ENCODE measurements at regions of chr1 and their contacts with region 1.

Region 1: GRCh38 chr1:38012363-38013226 is at the start of gene UTP11:
- DNase-seq: peak; percentile 94 to 99 (median 96)
- ATAC-seq: peak; percentile 89
- H3K4me3 ChIP-seq: peak within 1 kb of the TSS; percentile 89
- H3K27ac ChIP-seq: peak within 1 kb of the TSS; percentile 98
- H3K4me1 ChIP-seq: peaks cover 29 to 61% of the 10 kb centered on the region in 2 experiments
- H3K27me3 ChIP-seq: no peaks in the 10 kb centered on the region
- CTCF ChIP-seq: peak in 1 of 3 experiments; percentile 3; a peak in 1 of 6 replicates
- EP300 ChIP-seq: peak; percentile 44; the same call in 1 of the 2 replicates
- POLR2A ChIP-seq: peak; percentile 97
- RAD21 ChIP-seq: no peak
- polyA plus RNA-seq, gene UTP11: 269 to 303 TPM

Region 2: GRCh38 chr1:37817481-37817880 is 195.1 kb before region 1 on chr1:
- CTCF ChIA-PET with region 1: no interaction called
- POLR2A ChIA-PET with region 1: no interaction called
- in situ Hi-C with region 1: no loop called
- intact Hi-C with region 1: no loop called
- DNase-seq: peak in 2 of 4 experiments; percentile 15 to 36
- ATAC-seq: peak; percentile 80
- H3K4me3 ChIP-seq: no peak overlapping the region
- H3K27ac ChIP-seq: no peak overlapping the region
- H3K4me1 ChIP-seq: no peaks in the 10 kb centered on the region
- H3K27me3 ChIP-seq: no peaks in the 10 kb centered on the region
- CTCF ChIP-seq: 0 out of 6 replicates have a peak, but pooled peaks of 1 of the 3 experiments have one; percentile 20
- EP300 ChIP-seq: no peak
- POLR2A ChIP-seq: no peak
- RAD21 ChIP-seq: no peak

Region 3: DNA sequence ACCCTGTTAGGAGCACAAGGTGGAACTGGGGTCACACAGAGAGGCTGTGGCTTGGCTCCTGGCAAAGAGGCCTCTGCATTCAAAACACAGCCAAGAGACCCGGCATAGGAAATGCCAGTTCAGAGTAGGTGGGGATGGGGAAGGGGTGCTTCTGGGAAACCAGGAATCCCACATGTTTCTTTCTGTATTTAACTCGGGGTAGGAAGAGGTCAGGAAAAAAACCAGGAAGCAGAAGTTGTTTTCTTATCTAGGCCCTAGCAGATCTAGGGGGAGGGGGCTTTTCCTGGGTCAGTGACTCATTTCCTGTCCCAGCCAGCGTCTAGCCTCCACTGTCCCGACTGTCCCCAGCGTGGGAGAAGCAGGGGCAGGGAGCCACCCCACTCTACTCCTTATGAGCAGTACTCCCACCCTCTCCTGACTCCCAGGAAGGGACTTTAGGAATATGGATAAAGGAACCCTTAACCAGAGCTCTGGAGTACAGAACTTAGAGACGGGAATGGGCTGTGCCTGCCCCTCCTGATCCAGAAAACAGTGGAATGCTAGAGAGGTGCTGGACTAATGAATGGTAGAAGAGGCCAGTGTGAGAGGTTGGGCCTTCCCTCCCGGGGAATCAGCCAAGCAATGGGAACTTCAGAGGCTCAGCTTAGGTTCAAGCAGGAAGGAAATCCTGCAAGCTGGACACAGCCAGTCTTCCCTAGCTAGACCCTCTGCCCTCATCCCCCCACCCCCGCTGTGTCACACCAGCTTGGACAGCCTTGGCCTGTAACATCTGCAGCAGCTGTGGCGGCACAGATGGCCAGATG is 13.0 kb before region 1 on chr1:
- CTCF ChIA-PET with region 1: no interaction called
- POLR2A ChIA-PET with region 1: interaction called, 66 read pairs
- in situ Hi-C with region 1: no loop called
- intact Hi-C with region 1: loop called (anchors 1 kb)
- DNase-seq: peak; percentile 84 to 96 (median 89)
- ATAC-seq: peak; percentile 74
- H3K4me3 ChIP-seq: peak overlapping the region; percentile 65
- H3K27ac ChIP-seq: peak overlapping the region; percentile 96
- H3K4me1 ChIP-seq: peaks cover 51 to 73% of the 10 kb centered on the region in 2 experiments
- H3K27me3 ChIP-seq: no peaks in the 10 kb centered on the region
- CTCF ChIP-seq: no peak
- EP300 ChIP-seq: peak; percentile 98
- POLR2A ChIP-seq: peak; percentile 81
- RAD21 ChIP-seq: 0 out of 4 replicates have a peak, but pooled peaks of 1 of the 2 experiments have one; percentile 2

Region 4: DNA sequence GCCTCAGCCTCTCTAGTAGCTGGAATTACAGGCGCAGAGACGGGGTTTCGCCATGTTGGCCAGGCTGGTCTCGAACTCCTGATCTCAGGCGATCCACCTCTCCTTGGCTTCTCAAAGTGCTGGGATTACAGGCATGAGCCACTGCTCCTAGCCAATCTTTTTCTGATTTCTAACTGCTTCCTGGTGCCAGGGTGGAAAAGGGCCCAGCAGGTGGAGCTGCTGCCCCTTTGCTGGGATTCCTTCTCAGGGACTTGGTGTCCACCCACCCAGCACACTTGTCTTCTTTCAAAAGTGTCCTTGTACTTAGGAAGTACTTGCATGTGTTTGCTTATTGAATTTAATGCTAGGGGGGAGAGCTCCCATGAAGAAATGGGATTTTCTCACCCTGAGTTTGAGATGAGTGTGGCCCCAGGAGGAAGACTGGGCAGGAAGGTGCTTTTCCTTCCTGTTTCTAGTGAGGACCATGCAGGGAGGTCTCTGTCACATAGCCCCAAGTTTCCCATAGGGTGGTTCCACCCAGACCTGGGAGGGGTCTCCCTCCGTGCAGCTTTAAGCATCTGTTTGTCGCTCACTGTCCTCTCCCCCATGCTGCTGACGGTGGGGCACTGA is 14.1 kb after region 1 on chr1:
- CTCF ChIA-PET with region 1: no interaction called
- POLR2A ChIA-PET with region 1: interaction called, 71 read pairs
- in situ Hi-C with region 1: no loop called
- intact Hi-C with region 1: no loop called
- DNase-seq: peak in 2 of 4 experiments; percentile 58 to 65
- ATAC-seq: peak; percentile 69
- H3K4me3 ChIP-seq: no peak overlapping the region
- H3K27ac ChIP-seq: no peak overlapping the region
- H3K4me1 ChIP-seq: peaks cover 10 to 34% of the 10 kb centered on the region in 2 experiments; a peak in 4 of 5 replicates
- H3K27me3 ChIP-seq: no peaks in the 10 kb centered on the region
- CTCF ChIP-seq: peak; percentile 67 to 82 (median 77)
- EP300 ChIP-seq: no peak
- POLR2A ChIP-seq: no peak; the same call in 1 of the 2 replicates
- RAD21 ChIP-seq: peak; percentile 70 to 74

Region 5: GRCh38 chr1:38064232-38064903 is 51.8 kb after region 1 on chr1:
- CTCF ChIA-PET with region 1: no interaction called
- POLR2A ChIA-PET with region 1: no interaction called
- in situ Hi-C with region 1: no loop called
- intact Hi-C with region 1: no loop called
- DNase-seq: peak; percentile 65 to 78 (median 70)
- ATAC-seq: peak; percentile 83
- H3K4me3 ChIP-seq: no peak overlapping the region
- H3K27ac ChIP-seq: no peak overlapping the region
- H3K4me1 ChIP-seq: peaks cover 5 to 24% of the 10 kb centered on the region in 2 experiments; a peak in 4 of 5 replicates
- H3K27me3 ChIP-seq: peaks cover 4 to 29% of the 10 kb centered on the region in 2 experiments; a peak in 2 of 5 replicates
- CTCF ChIP-seq: peak in 2 of 3 experiments; percentile 10 to 24; a peak in 1 of 6 replicates
- EP300 ChIP-seq: no peak
- POLR2A ChIP-seq: no peak
- RAD21 ChIP-seq: 0 out of 4 replicates have a peak, but pooled peaks of 1 of the 2 experiments have one; percentile 9

Measured in K562 (cell line).